Sciatic nerve (tissue), 2 donors: ENCODE measurements at regions of chr14 and their contacts with region 1.

Region 1: DNA sequence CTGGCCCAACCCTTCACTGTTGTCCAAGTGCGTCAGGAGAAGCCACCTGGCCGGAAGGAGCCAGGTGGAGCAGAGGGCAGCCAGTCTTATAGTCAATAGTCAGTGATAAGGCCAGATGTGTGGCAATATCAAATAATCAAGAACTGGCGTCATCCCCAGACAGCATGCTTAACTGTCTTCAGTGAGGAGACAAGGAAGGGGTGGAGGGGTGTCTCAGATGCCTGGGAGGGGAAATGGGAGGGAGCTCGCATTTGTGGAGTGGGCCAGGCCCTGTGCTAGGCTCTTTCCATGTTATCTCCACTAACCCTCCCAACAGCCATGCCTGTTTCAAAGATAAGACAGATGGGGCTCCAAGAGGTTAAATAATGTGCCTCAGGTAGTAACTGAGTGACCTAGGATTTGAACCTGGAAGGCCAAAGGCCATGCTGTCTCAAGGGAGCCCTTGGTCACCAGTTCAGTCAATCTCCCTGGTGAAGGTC is 48.9 kb upstream of the FOS start:
- DNase-seq: no peak
- ATAC-seq: no peak

Region 2: DNA sequence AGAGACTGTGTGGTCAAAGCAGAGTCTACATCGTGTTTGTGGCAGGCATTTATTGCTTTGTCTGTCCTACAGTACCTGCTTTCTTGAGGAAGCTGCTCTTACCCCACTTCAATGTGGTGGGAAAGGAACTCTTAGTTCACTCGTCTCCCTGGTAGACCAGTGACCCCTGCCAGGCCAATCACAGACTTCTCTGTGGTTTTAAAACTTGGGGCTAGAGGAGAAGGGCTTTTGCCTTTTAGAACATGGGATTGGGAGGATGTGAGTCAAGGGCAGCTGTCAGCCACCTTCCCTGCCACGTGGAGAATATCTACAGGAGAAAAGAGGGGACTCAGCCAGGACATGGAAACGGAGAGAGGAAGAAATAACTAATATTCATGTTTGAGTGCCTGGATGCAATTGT is 16.5 kb before region 1 on chr14:
- intact Hi-C with region 1: loop called (anchors 2 kb)
- DNase-seq: no peak
- ATAC-seq: no peak

Region 3: GRCh38 chr14:75258615-75259466 is 29.1 kb after region 1 on chr14:
- intact Hi-C with region 1: no loop called
- DNase-seq: peak; percentile 100
- ATAC-seq: peak; percentile 96